Activated T-helper 1 cell treated with anti-CD3 and anti-CD28 coated beads, Interleukin-12 subunit alpha, Interleukin-12 subunit beta, Interleukin-2, Interleukin-4 antibody, amounts not matched to agents 30 ng/mL and 10 ng/mL and 1 ng/mL, durations not matched to agents 14 hours and 24 hours and 36 hours (primary cell): ENCODE measurements at regions of chr11 and their contacts with region 1.

Region 1: GRCh38 chr11:17077520-17078401 is at the start of gene RPS13:
- DNase-seq: peak; percentile 93
- H3K4me3 Mint-ChIP-seq: peak within 1 kb of the TSS; percentile 99
- H3K27ac Mint-ChIP-seq: peak within 1 kb of the TSS; percentile 95
- H3K4me1 Mint-ChIP-seq: peaks cover 39% of the 10 kb centered on the region
- H3K27me3 Mint-ChIP-seq: no peaks in the 10 kb centered on the region
- total RNA-seq, gene RPS13: 1,187 and 1,191 TPM in 2 replicates

Region 2: DNA sequence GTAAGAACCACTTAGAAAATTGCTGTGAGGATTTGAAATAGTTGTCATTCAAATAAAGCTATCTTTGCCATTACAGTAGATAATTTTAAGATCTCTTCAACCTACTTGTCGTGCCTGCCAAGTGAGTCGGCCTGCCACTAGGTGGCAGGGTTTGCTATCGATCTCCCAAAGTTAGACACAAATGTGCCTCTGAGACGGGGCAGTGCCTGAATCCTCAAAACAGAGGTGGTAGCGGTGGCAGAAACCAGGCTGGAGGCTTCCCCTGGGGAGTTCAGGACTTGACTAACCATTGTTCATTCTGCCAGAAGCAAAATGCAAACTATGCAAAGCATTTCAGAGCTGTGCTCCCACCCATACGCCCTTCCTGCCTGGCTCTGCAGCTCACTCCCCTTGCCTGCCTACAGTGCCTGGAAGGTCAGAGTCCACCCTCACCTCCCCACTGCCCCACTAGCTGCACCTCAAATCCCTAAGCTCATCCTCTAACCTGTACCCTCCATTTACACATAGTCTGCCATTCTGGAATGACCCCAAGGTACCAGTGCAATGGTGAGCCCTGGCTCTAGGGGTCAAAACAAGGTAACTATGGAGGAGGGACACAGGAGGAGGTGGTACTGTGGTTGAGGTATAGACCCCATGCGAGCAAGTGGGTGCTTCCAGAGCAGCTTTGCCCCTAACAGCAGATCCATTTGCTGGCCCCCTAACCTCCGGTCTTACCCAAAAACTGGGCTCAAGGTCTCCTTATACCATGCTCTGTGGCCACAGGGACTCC is 257.3 kb before region 1 on chr11:
- intact Hi-C with region 1: loop called (anchors 5 kb)
- DNase-seq: peak; percentile 16
- H3K4me3 Mint-ChIP-seq: no peak overlapping the region
- H3K27ac Mint-ChIP-seq: no peak overlapping the region
- H3K4me1 Mint-ChIP-seq: peaks cover 12% of the 10 kb centered on the region
- H3K27me3 Mint-ChIP-seq: peaks cover 3% of the 10 kb centered on the region

Region 3: DNA sequence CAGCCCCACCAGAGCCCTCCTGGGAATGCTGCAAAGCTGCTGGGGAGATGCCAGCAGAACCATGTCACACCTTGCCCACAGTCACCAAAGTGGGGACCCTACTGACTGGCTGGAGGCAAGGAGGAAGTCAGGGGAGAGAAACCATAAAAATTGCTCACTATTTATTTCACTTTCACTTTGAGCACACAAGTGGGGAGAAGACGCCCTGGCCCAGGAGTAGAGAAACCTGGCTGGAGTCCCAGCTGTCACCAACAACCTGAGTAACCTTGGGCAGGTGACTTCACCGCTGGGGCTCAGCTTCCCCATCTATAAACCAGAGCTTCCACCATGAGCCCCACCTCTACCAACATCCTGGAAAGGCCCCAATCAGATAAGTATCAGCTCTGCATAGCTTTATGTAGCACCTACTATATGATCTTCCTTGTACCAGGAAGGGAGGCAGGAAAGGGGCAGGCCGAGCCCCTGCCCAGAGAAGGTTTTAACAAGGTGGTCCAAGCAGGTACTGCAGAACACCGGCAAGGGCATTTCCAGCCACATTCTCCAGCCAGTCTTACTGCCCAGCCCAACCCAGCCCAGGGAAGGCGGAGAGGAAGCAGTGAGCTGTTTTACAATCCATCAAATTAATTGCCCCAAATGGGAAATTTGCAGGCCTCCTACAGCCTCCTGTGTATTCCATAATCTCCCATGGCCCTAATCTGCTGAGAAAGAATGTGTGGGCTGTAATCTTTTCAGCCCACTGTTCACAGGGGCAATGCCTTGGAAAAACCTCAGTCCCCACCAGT is 91.1 kb before region 1 on chr11:
- intact Hi-C with region 1: loop called (anchors 1 kb)
- DNase-seq: peak; percentile 37
- H3K4me3 Mint-ChIP-seq: no peak overlapping the region
- H3K27ac Mint-ChIP-seq: peak overlapping the region; percentile 8
- H3K4me1 Mint-ChIP-seq: peaks cover 29% of the 10 kb centered on the region
- H3K27me3 Mint-ChIP-seq: peaks cover 2% of the 10 kb centered on the region

Region 4: GRCh38 chr11:17230867-17231851 is 153.4 kb after region 1 on chr11:
- intact Hi-C with region 1: loop called (anchors 1 kb)
- DNase-seq: peak; percentile 44
- H3K4me3 Mint-ChIP-seq: no peak overlapping the region
- H3K27ac Mint-ChIP-seq: peak overlapping the region; percentile 77
- H3K4me1 Mint-ChIP-seq: peaks cover 20% of the 10 kb centered on the region
- H3K27me3 Mint-ChIP-seq: peaks cover 36% of the 10 kb centered on the region

Region 5: DNA sequence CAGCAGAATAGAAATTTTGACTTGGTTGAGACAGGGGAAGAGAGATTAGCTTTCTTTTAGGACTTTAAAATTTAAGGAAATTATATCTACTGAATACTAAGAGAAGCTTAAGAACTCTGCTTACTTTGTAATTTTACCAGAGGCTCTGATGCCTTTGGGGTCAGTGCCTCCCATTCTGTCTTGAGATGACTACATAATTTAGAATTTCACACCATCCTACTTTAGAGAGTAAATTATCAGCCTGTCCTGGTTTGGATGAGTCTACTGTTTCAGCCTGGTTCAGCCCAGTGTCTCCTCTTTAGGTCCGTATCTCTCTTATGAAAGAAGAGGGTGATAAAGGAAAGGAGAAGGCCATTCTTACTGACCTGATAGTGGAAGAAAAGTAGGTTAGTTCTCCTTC is 208.6 kb after region 1 on chr11:
- intact Hi-C with region 1: no loop called
- DNase-seq: no peak
- H3K4me3 Mint-ChIP-seq: no peak overlapping the region
- H3K27ac Mint-ChIP-seq: peak overlapping the region; percentile 44
- H3K4me1 Mint-ChIP-seq: peaks cover 50% of the 10 kb centered on the region
- H3K27me3 Mint-ChIP-seq: peaks cover 1% of the 10 kb centered on the region

Region 6: DNA sequence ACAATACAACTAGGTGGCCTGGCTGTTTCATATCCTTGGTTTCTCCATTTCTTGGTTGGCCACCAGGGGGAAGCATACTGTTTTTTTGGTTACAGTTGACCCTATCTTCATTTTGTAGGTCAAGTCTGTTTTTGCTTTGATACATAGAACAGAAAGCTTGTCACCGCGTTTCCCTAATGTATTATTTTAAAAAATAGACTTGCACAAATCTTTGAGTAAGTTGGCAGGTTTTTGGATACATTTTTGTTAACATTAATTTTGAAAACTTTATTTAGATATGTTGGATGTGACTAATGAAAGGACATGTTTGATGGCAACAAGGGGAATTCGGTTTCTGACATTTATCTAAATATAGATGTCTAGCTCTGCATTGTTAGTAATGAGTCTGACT is 276.8 kb after region 1 on chr11:
- intact Hi-C with region 1: loop called (anchors 1 kb)
- DNase-seq: peak; percentile 56
- H3K4me3 Mint-ChIP-seq: peak overlapping the region; percentile 73
- H3K27ac Mint-ChIP-seq: peak overlapping the region; percentile 73
- H3K4me1 Mint-ChIP-seq: peaks cover 40% of the 10 kb centered on the region
- H3K27me3 Mint-ChIP-seq: peaks cover 43% of the 10 kb centered on the region

Region 7: GRCh38 chr11:18012863-18013781 is 935.4 kb after region 1 on chr11 and contains the start of gene SERGEF:
- intact Hi-C with region 1: loop called (anchors 2 kb)
- DNase-seq: peak; percentile 92
- H3K4me3 Mint-ChIP-seq: peak within 1 kb of the TSS; percentile 97
- H3K27ac Mint-ChIP-seq: peak within 1 kb of the TSS; percentile 98
- H3K4me1 Mint-ChIP-seq: peaks cover 44% of the 10 kb centered on the region
- H3K27me3 Mint-ChIP-seq: peaks cover 5% of the 10 kb centered on the region
- total RNA-seq, gene SERGEF: 24.5 and 32.8 TPM in 2 replicates